BJ (cell line): ENCODE measurements at regions of chr15 and their contacts with region 1.

Region 1: GRCh38 chr15:38474155-38474757 is 20.3 kb downstream of the FAM98B start:
- DNase-seq: peak; percentile 26
- H3K4me3 ChIP-seq: no peak overlapping the region
- H3K27me3 ChIP-seq: no peaks in the 10 kb centered on the region
- CTCF ChIP-seq: peak; percentile 71

Region 2: DNA sequence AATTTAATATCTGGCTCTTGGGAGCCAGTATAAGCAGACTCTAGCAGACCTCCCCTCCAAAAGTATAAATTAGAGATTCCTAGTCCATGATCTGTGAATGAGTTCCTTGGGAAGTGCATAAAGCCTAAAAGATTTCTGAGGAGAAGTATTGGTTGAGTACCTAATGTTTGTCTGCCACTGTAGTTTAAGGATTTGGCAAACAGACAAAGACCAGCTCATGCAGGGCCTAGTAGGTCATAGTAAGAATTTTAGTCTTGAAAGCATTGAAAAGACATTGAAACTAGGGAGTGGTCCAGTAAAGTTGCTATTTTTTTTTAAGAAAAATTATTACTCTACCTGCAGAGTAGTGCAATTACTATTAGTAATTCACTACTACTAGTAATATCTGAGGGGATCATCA is 154.1 kb before region 1 on chr15:
- CTCF ChIA-PET with region 1: no interaction called
- POLR2A ChIA-PET with region 1: no interaction called
- DNase-seq: no peak
- H3K4me3 ChIP-seq: no peak overlapping the region
- H3K27me3 ChIP-seq: no peaks in the 10 kb centered on the region
- CTCF ChIP-seq: no peak

Region 3: DNA sequence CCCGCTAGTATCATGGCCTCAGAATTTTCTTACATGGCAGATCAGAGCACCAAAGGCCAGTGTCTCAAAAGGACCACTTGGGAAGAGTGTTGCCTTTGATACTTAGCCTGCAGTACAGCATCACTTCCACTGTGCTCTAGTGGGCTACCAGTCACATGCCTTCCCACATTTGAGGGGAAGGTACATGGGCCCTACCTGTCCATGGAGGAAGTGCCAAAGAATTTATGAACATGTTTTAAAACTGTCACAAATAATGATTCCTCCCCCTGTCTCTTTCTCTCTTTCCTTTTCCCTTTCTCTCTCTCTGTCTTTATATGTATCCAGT is 43.9 kb before region 1 on chr15:
- CTCF ChIA-PET with region 1: no interaction called
- POLR2A ChIA-PET with region 1: no interaction called
- DNase-seq: no peak
- H3K4me3 ChIP-seq: no peak overlapping the region
- H3K27me3 ChIP-seq: peaks cover 6% of the 10 kb centered on the region
- CTCF ChIP-seq: no peak

Region 4: GRCh38 chr15:38490242-38490922 is 16.1 kb after region 1 on chr15:
- CTCF ChIA-PET with region 1: interaction called, 11 read pairs
- POLR2A ChIA-PET with region 1: no interaction called
- DNase-seq: peak; percentile 44
- H3K4me3 ChIP-seq: no peak overlapping the region
- H3K27me3 ChIP-seq: no peaks in the 10 kb centered on the region
- CTCF ChIP-seq: no peak

Region 5: GRCh38 chr15:38683382-38684242 is 209.4 kb after region 1 on chr15:
- CTCF ChIA-PET with region 1: interaction called, 50 read pairs
- POLR2A ChIA-PET with region 1: no interaction called
- DNase-seq: no peak
- H3K4me3 ChIP-seq: no peak overlapping the region
- H3K27me3 ChIP-seq: no peaks in the 10 kb centered on the region
- CTCF ChIP-seq: peak; percentile 78

Region 6: DNA sequence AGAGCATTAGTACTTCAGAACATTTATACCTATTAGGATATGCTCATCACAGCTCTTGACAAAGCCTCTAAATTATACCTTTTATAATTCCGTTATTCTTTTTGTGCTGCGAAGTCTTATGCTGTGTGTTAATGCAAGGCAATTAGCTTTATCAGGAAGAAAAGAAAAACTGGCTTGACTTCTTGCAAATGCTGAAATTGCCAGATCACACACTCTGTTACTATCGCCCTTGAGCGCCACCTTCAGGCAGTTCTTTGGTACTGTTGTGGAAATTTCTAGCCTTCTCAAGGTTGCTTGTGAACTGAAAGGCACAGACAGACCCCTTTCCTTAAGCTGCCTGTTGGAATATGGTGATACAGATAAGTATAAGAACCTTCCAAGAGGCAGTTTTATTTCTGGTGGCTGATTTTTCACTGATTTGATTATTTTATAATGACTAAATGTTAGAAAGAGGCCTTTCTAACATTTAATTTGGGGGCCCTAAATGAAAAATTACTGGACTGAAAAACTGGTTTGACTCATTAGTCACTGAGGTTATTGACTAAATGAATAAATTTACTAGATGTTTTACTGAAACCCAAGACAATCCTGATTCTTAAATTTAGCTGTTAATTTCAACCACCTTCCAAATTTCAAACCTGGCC is 216.6 kb after region 1 on chr15:
- CTCF ChIA-PET with region 1: interaction called, 20 read pairs
- POLR2A ChIA-PET with region 1: no interaction called
- DNase-seq: no peak
- H3K4me3 ChIP-seq: no peak overlapping the region
- H3K27me3 ChIP-seq: no peaks in the 10 kb centered on the region
- CTCF ChIP-seq: peak; percentile 80

Region 7: DNA sequence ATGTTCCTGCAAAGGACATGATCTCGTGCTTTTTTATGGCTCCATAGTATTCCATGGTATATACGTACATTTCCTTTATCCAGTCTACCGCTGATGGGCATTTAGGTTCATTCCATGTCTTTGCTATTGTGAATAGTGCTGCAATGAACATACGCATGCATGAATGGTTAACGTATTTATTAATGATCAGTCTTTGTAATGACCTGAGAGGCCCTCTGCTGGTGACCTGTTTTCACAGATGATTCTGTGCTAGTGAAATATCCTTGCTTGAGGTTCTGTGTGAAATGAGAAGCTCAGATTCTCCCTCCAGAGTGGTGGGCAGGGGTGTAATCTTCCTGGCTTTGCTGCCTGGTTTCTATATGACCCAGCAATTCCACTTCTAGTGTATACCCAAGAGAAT is 250.6 kb after region 1 on chr15:
- CTCF ChIA-PET with region 1: no interaction called
- POLR2A ChIA-PET with region 1: no interaction called
- DNase-seq: no peak
- H3K4me3 ChIP-seq: no peak overlapping the region
- H3K27me3 ChIP-seq: no peaks in the 10 kb centered on the region
- CTCF ChIP-seq: no peak